Activated T-helper 1 cell treated with anti-CD3 and anti-CD28 coated beads, Interleukin-12 subunit alpha, Interleukin-12 subunit beta, Interleukin-2, Interleukin-4 antibody, amounts not matched to agents 30 ng/mL and 10 ng/mL and 1 ng/mL, durations not matched to agents 14 hours and 24 hours and 36 hours (primary cell): ENCODE measurements at regions of chr6 and their contacts with region 1.

Region 1: GRCh38 chr6:87154993-87155841 is at the start of gene ZNF292:
- DNase-seq: peak; percentile 97
- H3K4me3 Mint-ChIP-seq: peak within 1 kb of the TSS; percentile 93
- H3K27ac Mint-ChIP-seq: peak within 1 kb of the TSS; percentile 98
- H3K4me1 Mint-ChIP-seq: peaks cover 50% of the 10 kb centered on the region
- H3K27me3 Mint-ChIP-seq: no peaks in the 10 kb centered on the region
- total RNA-seq, gene ZNF292: 50.1 and 51.7 TPM in 2 replicates

Region 2: DNA sequence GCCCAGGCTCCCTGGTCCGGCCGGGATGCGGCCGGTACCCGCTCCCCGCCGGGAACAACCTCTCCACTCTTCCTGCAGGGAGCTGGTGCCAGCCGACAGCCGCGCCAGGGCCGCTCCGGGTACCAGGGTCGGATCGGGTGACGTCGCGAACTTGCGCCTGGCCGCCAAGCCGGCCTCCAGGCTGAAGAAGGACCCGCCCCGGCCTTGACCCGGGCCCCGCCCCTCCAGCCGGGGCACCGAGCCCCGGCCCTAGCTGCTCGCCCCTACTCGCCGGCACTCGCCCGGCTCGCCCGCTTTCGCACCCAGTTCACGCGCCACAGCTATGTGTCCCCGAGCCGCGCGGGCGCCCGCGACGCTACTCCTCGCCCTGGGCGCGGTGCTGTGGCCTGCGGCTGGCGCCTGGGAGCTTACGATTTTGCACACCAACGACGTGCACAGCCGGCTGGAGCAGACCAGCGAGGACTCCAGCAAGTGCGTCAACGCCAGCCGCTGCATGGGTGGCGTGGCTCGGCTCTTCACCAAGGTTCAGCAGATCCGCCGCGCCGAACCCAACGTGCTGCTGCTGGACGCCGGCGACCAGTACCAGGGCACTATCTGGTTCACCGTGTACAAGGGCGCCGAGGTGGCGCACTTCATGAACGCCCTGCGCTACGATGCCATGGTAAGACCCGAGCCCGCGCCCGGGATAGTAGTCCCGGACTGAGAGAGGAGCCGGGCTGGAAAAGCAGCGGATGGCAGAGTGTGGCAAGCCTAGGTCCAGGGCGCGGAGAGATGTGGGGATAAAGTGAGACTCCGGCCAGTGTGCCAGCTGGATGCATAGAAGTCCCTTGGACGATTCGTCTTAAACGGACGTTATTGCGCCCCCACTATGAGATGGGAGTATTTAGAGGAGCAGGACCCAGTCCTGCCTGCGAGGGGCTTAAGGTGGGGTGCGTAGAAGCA is 1705.1 kb before region 1 on chr6 and contains the start of gene NT5E:
- intact Hi-C with region 1: loop called (anchors 2 kb)
- DNase-seq: peak; percentile 37
- H3K4me3 Mint-ChIP-seq: peak within 1 kb of the TSS; percentile 98
- H3K27ac Mint-ChIP-seq: peak within 1 kb of the TSS; percentile 89
- H3K4me1 Mint-ChIP-seq: peaks cover 66% of the 10 kb centered on the region
- H3K27me3 Mint-ChIP-seq: peaks cover 31% of the 10 kb centered on the region
- total RNA-seq, gene NT5E: 12.5 and 15.2 TPM in 2 replicates

Region 3: GRCh38 chr6:87078983-87079616 is 76.1 kb before region 1 on chr6:
- intact Hi-C with region 1: no loop called
- DNase-seq: peak; percentile 28
- H3K4me3 Mint-ChIP-seq: no peak overlapping the region
- H3K27ac Mint-ChIP-seq: no peak overlapping the region
- H3K4me1 Mint-ChIP-seq: no peaks in the 10 kb centered on the region
- H3K27me3 Mint-ChIP-seq: peaks cover 24% of the 10 kb centered on the region

Region 4: GRCh38 chr6:87182321-87182720 is 27.1 kb after region 1 on chr6:
- intact Hi-C with region 1: loop called (anchors 1 kb)
- DNase-seq: no peak
- H3K4me3 Mint-ChIP-seq: peak overlapping the region; percentile 52
- H3K27ac Mint-ChIP-seq: peak overlapping the region; percentile 81
- H3K4me1 Mint-ChIP-seq: peaks cover 71% of the 10 kb centered on the region
- H3K27me3 Mint-ChIP-seq: no peaks in the 10 kb centered on the region

Region 5: GRCh38 chr6:87210979-87211378 is 55.8 kb after region 1 on chr6:
- intact Hi-C with region 1: loop called (anchors 1 kb)
- DNase-seq: no peak
- H3K4me3 Mint-ChIP-seq: no peak overlapping the region
- H3K27ac Mint-ChIP-seq: no peak overlapping the region
- H3K4me1 Mint-ChIP-seq: peaks cover 59% of the 10 kb centered on the region
- H3K27me3 Mint-ChIP-seq: no peaks in the 10 kb centered on the region

Region 6: GRCh38 chr6:87322304-87323212 is 167.3 kb after region 1 on chr6 and contains the start of gene SMIM8:
- intact Hi-C with region 1: loop called (anchors 1 kb)
- DNase-seq: peak; percentile 84
- H3K4me3 Mint-ChIP-seq: peak within 1 kb of the TSS; percentile 99
- H3K27ac Mint-ChIP-seq: peak within 1 kb of the TSS; percentile 92
- H3K4me1 Mint-ChIP-seq: peaks cover 8% of the 10 kb centered on the region
- H3K27me3 Mint-ChIP-seq: peaks cover 3% of the 10 kb centered on the region
- total RNA-seq, gene SMIM8: 7.3 and 9.2 TPM in 2 replicates

Region 7: DNA sequence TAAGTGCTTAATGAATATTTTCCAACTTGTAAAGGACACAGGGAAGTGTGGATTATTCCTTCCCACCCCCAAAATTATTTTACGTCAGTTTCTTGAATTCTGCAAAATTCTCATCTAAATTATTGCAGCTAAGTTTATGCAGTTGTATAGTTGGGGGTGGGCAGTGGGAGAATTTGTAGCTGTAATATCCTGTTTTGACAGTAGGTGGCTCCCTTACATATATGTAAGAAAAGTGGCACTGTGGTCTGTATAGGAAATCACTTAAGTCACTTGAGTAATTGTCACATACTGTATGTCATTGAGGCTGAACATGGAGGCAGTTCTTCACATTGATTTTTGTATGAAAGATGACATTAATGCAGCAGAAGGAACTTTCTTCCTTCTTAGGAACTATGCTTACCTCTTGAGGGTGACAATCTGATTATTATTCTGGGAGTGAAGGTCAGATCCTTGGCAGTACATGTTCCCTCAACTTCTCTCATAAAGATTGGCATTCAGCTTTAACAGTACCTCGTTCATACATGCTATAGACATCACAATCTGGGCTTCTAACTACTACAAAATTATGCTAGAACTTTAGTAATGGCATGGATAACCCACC is 237.9 kb after region 1 on chr6:
- intact Hi-C with region 1: no loop called
- DNase-seq: peak; percentile 14
- H3K4me3 Mint-ChIP-seq: no peak overlapping the region
- H3K27ac Mint-ChIP-seq: no peak overlapping the region
- H3K4me1 Mint-ChIP-seq: no peaks in the 10 kb centered on the region
- H3K27me3 Mint-ChIP-seq: no peaks in the 10 kb centered on the region

Region 8: DNA sequence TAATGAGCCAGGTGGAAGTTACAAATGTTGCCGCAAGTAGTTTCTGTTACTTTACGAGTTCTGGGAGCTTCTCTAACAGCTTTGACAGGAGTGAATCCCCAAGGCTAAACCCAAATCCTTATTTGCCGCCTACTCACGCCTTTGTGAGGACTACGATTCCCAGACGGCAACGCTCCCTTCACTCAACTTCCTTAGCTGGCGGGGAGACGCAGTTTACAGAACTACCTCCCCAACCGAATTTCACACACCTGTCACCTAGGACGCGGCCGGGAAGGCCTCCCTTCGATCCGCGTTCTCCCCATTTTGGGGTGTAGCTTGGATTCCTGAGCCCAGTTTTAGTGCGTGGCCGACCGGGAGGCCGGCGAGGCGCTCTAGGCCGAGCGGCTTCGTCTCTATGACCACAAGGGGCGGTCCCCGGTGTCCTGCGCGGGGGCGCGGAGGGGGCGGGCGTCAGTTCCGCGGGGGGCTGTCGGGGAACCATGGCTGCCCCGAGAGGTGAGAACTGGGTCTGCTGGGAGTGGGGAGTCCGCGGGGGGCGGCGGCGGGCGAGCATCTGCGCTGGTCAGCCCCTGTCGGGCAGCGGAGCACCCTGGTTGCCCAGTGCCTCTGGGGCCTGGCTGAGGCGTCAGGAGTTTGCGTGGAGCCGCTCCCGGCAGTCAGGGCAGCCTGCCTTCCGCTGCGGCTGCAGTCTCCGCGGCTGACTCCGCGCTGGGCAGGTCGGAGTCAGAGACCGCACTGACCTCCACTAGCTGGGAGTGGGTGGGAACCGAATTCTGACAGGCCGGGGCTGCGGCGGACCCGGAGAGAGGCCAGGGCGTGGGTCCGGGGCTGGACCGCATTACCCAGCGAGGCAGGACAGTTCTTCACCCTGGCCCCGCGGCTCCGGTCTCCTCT is 317.6 kb after region 1 on chr6 and contains the start of gene SLC35A1:
- intact Hi-C with region 1: loop called (anchors 1 kb)
- DNase-seq: peak; percentile 77
- H3K4me3 Mint-ChIP-seq: peak within 1 kb of the TSS; percentile 98
- H3K27ac Mint-ChIP-seq: peak within 1 kb of the TSS; percentile 97
- H3K4me1 Mint-ChIP-seq: peaks cover 14% of the 10 kb centered on the region
- H3K27me3 Mint-ChIP-seq: peaks cover 7% of the 10 kb centered on the region
- total RNA-seq, gene SLC35A1: 9.7 and 10.2 TPM in 2 replicates

Region 9: DNA sequence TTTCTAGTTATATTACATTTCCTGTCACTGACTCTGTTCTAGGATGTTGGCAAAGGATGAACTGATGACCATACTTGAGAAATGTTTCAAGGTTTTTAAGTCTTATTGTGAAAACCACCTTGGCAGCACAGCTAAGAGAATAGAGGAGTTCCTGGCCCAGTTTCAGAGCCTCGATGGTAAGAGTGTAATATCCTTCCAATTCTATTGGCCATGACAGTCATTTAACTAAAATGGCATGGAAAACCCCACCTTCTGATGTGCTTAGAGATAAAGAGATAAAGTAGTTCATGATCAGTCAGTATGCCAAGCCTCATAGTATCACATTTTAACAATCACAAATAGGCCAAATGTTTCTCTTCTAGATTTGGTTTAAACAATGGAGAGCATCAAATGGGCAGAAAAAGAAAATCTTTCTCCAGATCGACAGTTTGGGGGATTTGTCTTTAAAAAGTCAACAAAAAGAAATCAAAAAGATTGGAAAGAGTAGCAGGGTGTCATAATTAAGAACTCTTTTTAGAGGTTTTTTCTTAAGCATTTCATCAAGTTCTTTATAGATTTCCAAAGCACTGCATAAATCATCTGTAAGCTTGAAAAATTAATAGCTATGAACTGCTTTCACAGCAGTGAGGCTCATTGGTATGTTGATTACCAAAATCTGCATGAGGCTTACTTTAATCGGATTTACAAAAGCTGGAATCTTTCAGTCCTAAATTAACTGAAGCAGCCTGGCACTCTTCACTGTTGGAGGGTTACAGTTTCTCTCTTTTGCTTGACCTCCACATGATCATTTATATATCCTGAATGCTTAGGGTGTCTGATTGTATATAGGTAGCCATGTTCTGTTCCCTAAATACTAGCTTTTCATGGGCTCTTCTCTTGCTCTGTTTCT is 498.1 kb after region 1 on chr6:
- intact Hi-C with region 1: loop called (anchors 1 kb)
- DNase-seq: no peak
- H3K4me3 Mint-ChIP-seq: peak overlapping the region; percentile 53
- H3K27ac Mint-ChIP-seq: peak overlapping the region; percentile 87
- H3K4me1 Mint-ChIP-seq: peaks cover 38% of the 10 kb centered on the region
- H3K27me3 Mint-ChIP-seq: no peaks in the 10 kb centered on the region

Region 10: GRCh38 chr6:87723170-87724078 is 568.2 kb after region 1 on chr6:
- intact Hi-C with region 1: no loop called
- DNase-seq: no peak
- H3K4me3 Mint-ChIP-seq: no peak overlapping the region
- H3K27ac Mint-ChIP-seq: no peak overlapping the region
- H3K4me1 Mint-ChIP-seq: peaks cover 26% of the 10 kb centered on the region
- H3K27me3 Mint-ChIP-seq: peaks cover 3% of the 10 kb centered on the region